ENCODE measurements at regions of chr1 and their contacts with region 1.

Region 1: DNA sequence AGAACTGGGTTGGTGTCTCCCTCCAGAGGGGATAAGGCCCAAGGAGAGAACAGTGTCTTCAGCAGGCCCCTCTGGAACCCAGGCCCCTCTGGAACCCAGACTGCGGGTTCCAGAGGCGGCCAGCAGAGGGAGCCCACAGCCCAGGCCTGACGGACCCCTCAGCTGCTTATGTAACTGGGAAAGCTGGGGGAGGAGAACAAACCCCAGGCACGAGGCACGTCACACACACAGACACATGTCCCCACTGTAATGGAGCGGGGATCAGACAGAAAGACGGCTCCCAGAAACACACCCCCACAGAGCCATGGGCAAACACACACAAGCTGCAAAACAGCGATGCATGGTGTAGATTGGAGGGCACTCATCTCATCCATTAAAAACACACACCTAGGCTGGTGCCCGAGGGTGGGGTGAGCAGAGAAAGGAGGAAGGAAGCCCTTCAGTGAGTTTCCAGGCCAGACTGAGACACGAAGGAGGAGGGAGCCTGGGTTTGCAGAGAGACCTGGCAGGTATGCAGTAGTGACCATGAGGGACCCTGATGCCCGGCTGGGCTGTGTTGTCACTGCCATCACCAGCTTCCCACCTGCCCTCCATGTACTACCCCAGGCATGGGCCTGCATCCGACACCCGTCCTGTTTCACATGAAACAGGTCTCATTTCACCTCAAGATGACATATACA is 2.8 kb upstream of the IGSF8 start:
- DNase-seq: no peak
- ATAC-seq: peak; percentile 71
- H3K4me3 ChIP-seq: 0 out of 4 replicates have a peak overlapping the region, but pooled peaks of 1 of the 2 experiments have one; percentile 10
- H3K27ac ChIP-seq: peak overlapping the region; percentile 35; the same call in 1 of the 2 replicates
- H3K4me1 ChIP-seq: peaks cover 3% of the 10 kb centered on the region; the same call in 1 of the 2 replicates
- H3K27me3 ChIP-seq: no peaks in the 10 kb centered on the region
- CTCF ChIP-seq: peak; percentile 95

Region 2: DNA sequence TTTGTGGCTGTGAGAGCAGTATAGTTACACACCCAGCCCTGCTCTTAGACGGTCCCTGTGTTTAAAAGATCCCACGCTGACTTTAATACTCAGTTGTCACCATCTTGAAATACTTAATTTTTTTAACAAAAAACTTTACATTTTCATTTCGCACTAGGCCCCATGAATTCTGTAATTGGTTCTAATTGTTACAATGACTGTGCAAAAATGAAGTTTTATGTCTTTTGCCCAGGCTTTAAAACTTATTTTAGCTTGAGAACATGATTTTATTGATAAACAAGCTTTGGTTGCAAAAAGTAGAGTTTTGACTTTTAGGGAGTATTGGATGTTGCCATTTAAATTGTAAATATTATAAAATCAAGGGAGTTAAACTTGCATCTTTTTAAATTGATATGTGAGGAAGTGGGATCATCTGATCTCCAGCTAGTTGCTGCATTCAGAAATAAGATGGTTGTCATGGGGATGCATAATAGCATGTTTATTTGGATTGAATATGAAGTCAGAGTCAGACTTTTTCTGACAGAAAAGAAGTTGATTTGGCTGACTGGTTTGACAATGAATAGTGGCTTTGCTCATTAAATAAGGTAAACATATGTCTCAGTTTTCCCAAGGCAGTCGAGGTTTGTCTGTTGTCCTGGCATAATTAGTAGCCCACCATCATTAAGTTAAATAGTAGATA is 363.8 kb before region 1 on chr1:
- CTCF ChIA-PET with region 1: no interaction called
- POLR2A ChIA-PET with region 1: no interaction called
- in situ Hi-C with region 1: no loop called
- intact Hi-C with region 1: no loop called
- DNase-seq: no peak
- ATAC-seq: no peak
- H3K4me3 ChIP-seq: no peak overlapping the region
- H3K27ac ChIP-seq: no peak overlapping the region
- H3K4me1 ChIP-seq: no peaks in the 10 kb centered on the region
- H3K27me3 ChIP-seq: no peaks in the 10 kb centered on the region
- CTCF ChIP-seq: no peak

Region 3: DNA sequence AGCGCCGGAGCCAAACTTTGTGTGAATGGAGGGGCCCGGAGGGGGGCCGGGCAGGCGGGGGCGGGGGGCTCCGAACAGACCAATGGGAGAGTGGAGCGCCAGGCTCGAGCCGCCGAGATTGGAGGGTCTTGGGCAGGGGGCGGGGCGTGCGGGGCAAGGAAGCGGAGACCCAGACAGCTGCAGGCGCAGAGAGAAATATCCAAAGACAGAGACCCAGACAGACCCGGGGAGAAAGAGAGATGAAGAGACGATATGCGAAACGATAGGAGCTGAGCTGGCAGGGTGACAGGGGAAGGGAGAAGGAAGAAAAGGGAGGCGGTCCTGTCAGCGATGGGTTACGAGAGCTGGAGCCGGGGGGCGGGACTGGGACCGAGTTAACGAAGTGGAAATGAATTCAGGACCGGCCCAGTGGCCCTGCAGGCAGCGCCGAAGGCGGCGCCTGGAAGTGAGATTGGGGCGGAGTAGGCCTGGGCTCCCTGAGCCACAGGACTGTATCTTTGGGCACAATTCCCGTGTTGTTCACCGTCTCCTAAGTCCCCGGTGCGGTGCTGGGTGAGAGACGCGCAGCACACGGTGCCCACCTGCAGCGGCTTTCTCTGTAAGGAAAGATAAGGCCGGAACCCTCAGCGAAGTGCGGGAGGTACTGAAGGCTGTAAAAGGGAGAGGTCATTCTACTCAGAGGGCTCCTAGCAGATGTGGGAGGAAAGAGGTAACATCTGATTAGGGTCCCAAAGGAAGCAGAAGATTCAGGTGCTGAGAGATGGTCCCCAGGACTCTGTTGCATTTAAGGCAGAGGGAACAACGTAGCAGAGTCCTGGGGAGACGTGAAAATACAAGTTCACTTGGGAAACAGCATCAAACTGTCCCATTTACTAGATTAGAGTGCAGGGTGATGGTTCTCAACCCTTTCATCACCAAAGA is 30.7 kb before region 1 on chr1:
- CTCF ChIA-PET with region 1: no interaction called
- POLR2A ChIA-PET with region 1: no interaction called
- in situ Hi-C with region 1: no loop called
- intact Hi-C with region 1: no loop called
- DNase-seq: no peak
- ATAC-seq: peak; percentile 91
- H3K4me3 ChIP-seq: peak overlapping the region; percentile 29 to 37
- H3K27ac ChIP-seq: no peak overlapping the region
- H3K4me1 ChIP-seq: no peaks in the 10 kb centered on the region
- H3K27me3 ChIP-seq: peaks cover 15% of the 10 kb centered on the region
- CTCF ChIP-seq: no peak

Region 4: DNA sequence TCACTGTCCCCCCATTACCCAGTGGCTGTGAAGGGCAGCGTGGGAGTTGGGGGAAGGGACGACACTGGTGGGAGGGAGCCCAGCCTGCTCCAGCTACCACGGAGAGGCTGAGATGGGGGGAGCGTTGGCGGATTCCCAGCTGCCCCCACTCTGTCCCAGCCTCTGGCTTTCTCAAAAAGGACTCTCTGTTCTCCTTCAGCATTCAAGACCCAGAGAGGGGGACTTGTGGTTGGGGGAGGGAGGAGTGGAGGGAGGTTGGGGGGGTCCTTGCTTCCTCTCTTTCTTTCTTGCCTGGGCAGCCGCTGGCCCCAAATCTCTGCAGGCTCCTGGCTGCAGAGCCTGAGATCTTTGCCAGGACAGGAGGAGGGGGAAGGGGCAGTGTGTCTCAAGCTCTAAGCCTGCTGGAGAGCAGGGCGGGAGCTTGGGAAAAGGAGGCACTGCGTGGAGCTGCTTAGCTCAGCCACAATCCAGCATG is 16.6 kb after region 1 on chr1:
- CTCF ChIA-PET with region 1: no interaction called
- POLR2A ChIA-PET with region 1: no interaction called
- in situ Hi-C with region 1: no loop called
- intact Hi-C with region 1: no loop called
- DNase-seq: no peak
- ATAC-seq: no peak
- H3K4me3 ChIP-seq: no peak overlapping the region
- H3K27ac ChIP-seq: no peak overlapping the region
- H3K4me1 ChIP-seq: no peaks in the 10 kb centered on the region
- H3K27me3 ChIP-seq: no peaks in the 10 kb centered on the region
- CTCF ChIP-seq: no peak

Region 5: DNA sequence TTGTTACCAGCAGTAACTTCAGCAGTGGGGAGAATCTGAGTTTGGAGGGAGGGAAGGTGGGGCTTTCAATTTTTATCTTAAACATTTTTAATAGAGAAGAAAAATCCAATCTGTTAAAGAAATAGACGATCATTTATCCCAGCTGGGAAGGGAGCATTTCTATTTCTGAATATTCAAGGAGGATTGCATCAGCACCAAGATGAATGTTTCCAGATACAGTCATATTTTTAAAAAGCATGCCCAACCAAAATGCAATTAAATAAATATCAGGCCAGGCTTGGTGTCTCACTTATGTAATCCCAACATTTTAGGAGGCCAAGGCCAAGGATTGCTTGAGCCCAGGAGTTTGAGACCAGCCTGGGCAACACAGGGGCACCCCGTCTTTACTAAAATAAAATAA is 48.5 kb after region 1 on chr1:
- CTCF ChIA-PET with region 1: no interaction called
- POLR2A ChIA-PET with region 1: no interaction called
- in situ Hi-C with region 1: no loop called
- intact Hi-C with region 1: no loop called
- DNase-seq: no peak
- ATAC-seq: no peak
- H3K4me3 ChIP-seq: no peak overlapping the region
- H3K27ac ChIP-seq: no peak overlapping the region
- H3K4me1 ChIP-seq: no peaks in the 10 kb centered on the region
- H3K27me3 ChIP-seq: peaks cover 2% of the 10 kb centered on the region; the same call in 1 of the 2 replicates
- CTCF ChIP-seq: no peak

Region 6: GRCh38 chr1:160193091-160193819 is 92.1 kb after region 1 on chr1:
- CTCF ChIA-PET with region 1: interaction called, 5 read pairs
- POLR2A ChIA-PET with region 1: no interaction called
- in situ Hi-C with region 1: no loop called
- intact Hi-C with region 1: loop called (anchors 10 kb)
- DNase-seq: peak; percentile 69
- ATAC-seq: peak; percentile 92
- H3K4me3 ChIP-seq: peak overlapping the region in 1 of 2 experiments; percentile 11; a peak in 1 of 4 replicates
- H3K27ac ChIP-seq: no peak overlapping the region
- H3K4me1 ChIP-seq: peaks cover 7% of the 10 kb centered on the region; the same call in 1 of the 2 replicates
- H3K27me3 ChIP-seq: no peaks in the 10 kb centered on the region
- CTCF ChIP-seq: peak; percentile 96

Region 7: DNA sequence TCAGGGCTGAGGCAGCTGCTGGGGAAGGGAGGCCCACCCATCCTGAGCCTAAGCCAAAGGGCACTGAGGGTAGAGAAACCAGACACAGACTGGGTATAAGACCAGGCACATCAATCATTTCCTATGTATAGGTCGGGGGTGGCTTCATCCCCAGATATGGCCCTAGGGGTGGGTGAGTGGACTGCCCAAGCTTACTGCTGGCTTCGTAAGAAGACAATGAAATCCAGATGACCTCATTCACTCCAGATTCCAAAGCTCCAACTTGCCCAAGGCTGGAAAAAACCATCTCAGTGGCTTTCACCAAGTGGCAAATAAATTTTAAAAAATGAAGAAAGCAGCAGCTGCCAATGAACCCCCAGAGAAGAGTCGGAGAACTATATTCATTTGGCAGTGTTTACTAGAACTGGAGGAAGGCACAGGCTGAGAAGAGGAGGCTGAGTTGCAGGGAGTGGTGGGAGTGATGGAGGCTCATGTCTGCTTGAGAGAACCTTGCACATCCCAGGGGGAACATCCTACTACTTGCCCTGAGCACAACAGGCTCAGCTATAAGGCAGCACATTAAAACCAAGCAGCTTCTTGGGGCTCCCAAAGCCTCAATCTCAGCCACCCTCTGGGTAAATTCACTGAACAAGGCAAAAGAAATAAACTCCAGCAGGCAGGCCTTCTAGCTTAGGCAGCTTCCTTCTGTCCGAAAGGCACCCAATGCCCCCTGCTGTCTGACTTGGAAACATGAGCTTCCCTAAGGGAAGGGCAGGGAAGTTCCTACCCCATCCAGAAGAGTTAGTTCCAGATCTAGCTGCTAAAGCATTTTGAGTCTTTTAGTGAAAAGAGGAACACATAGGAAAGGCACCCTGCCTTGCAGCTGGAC is 118.1 kb after region 1 on chr1:
- CTCF ChIA-PET with region 1: interaction called, 15 read pairs
- POLR2A ChIA-PET with region 1: no interaction called
- in situ Hi-C with region 1: no loop called
- intact Hi-C with region 1: no loop called
- DNase-seq: peak; percentile 10
- ATAC-seq: peak; percentile 79
- H3K4me3 ChIP-seq: no peak overlapping the region
- H3K27ac ChIP-seq: no peak overlapping the region
- H3K4me1 ChIP-seq: no peaks in the 10 kb centered on the region
- H3K27me3 ChIP-seq: no peaks in the 10 kb centered on the region
- CTCF ChIP-seq: peak; percentile 68

Region 8: DNA sequence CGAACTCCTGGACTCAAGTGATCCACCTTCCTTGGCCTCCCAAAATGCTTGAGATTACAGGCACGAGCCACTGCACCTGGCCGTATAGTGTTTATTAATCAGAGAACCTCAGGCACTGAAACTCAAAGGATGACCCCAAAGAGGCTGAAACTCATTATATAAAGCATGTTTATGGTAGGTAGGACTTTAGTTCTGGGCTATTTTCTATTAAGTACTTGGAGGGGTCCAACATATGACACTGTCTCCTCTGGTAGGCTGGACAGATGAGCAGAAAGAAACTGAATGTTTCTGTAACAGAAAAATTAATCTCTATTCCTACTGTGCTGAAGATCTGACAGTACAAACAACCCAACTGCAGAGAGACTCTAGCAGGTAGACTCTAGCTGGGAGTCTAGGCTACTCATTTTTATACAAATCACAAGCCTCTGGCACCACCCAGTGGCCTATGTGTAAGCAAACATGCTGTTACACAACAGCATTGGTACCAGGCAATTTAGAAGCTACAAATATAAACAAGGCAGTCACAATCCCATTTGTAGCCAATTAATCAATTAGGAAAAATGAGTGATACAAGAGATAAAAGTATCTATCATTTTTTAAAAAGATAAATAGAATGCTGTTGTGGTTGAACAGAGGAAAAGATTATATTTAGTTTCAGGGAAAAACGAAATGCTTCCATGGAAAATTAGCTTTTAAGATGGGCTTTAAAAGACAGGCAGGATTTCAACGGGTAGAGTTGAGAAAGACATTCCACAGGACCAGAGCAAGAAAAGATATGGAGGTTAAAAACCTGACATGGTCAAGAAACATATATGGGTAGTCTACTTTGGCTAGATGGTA is 150.7 kb after region 1 on chr1:
- CTCF ChIA-PET with region 1: interaction called, 18 read pairs
- POLR2A ChIA-PET with region 1: interaction called, 3 read pairs
- in situ Hi-C with region 1: no loop called
- intact Hi-C with region 1: loop called (anchors 2 kb)
- DNase-seq: no peak
- ATAC-seq: peak; percentile 97
- H3K4me3 ChIP-seq: no peak overlapping the region
- H3K27ac ChIP-seq: no peak overlapping the region
- H3K4me1 ChIP-seq: no peaks in the 10 kb centered on the region
- H3K27me3 ChIP-seq: no peaks in the 10 kb centered on the region
- CTCF ChIP-seq: peak; percentile 74

Region 9: GRCh38 chr1:160291248-160292220 is 190.4 kb after region 1 on chr1:
- CTCF ChIA-PET with region 1: interaction called, 7 read pairs
- POLR2A ChIA-PET with region 1: no interaction called
- in situ Hi-C with region 1: no loop called
- intact Hi-C with region 1: loop called (anchors 1 kb)
- DNase-seq: peak; percentile 63
- ATAC-seq: peak; percentile 94
- H3K4me3 ChIP-seq: no peak overlapping the region
- H3K27ac ChIP-seq: no peak overlapping the region
- H3K4me1 ChIP-seq: no peaks in the 10 kb centered on the region
- H3K27me3 ChIP-seq: no peaks in the 10 kb centered on the region
- CTCF ChIP-seq: peak; percentile 89

Region 10: GRCh38 chr1:160376525-160377131 is 275.5 kb after region 1 on chr1:
- CTCF ChIA-PET with region 1: interaction called, 5 read pairs
- POLR2A ChIA-PET with region 1: no interaction called
- in situ Hi-C with region 1: no loop called
- intact Hi-C with region 1: loop called (anchors 2 kb)
- DNase-seq: peak; percentile 63
- ATAC-seq: peak; percentile 87
- H3K4me3 ChIP-seq: no peak overlapping the region
- H3K27ac ChIP-seq: no peak overlapping the region
- H3K4me1 ChIP-seq: no peaks in the 10 kb centered on the region
- H3K27me3 ChIP-seq: no peaks in the 10 kb centered on the region
- CTCF ChIP-seq: peak; percentile 97

Measured in Panc1 (cell line).